ENCODE measurements at regions of chr3 and their contacts with region 1.

Region 1: DNA sequence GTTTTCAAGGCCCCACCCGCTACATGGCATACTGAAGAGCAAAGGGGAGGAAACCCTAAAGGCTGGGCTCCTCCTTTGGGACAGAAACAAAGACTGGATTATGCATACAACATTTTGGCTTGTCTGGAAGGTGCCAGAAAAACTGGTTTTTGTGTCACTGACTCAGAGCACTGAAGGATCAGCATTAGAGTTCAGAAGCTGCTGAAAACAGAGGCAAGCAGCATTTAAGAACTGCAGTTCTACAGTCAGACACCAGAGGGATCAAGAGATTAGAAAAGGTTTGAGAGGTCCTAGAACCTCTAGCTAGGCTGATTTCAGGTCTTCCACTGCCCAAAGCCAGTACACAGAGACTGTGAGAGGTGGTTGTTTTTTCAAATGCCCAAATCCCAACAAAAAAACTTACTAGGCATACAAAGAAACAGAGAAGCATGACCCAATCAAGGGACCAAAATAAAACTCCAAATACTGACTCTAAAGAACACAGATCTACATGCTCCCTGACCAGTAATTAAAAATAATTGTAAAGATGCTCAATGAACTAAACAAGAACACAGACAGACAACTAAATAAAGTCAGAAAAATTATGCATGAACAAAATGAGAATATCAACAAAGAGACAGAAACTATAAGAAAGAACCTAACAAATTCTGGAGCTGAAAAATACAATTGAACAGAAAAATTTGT is 91.2 kb downstream of the SENP2 start:
- DNase-seq: peak; percentile 79
- H3K4me3 Mint-ChIP-seq: no peak overlapping the region
- H3K27ac Mint-ChIP-seq: peak overlapping the region; percentile 63
- H3K4me1 Mint-ChIP-seq: peaks cover 8% of the 10 kb centered on the region
- H3K27me3 Mint-ChIP-seq: no peaks in the 10 kb centered on the region
- CTCF ChIP-seq: peak; percentile 70

Region 2: DNA sequence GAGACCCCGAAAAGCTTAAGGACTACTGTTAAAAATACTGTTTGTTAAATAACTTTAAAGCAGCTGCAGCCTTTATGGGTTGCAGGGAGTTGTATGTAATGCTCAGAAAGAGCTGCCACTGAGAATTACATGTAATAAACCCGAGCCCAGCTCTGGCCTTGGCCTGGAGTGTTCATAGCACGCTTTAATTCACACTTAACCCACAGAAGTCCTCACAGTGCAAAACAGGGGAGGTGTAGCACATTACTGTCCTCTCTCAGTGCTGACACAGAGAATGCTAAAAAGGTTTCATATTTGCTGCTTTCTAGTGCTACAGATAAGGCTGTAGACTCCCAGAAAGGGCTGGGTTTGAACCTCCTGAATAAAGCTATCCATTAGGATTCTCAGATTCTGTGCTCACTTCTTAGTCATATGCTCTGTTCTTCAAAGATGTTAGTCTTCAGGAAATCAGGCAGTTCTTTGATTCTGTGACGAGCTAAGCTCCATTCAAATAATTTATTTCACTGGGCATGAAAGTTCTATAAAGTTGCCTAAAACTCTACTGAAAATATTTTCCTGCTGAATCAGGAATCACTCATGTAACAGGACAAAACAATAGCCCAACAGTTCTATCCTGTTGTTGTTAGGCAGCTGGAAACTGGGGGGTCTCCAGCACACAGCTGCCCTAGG is 16.8 kb after region 1 on chr3:
- CTCF ChIA-PET with region 1: interaction called, 12 read pairs
- POLR2A ChIA-PET with region 1: interaction called, 8 read pairs
- intact Hi-C with region 1: no loop called
- DNase-seq: no peak
- H3K4me3 Mint-ChIP-seq: no peak overlapping the region
- H3K27ac Mint-ChIP-seq: peak overlapping the region; percentile 35
- H3K4me1 Mint-ChIP-seq: peaks cover 8% of the 10 kb centered on the region
- H3K27me3 Mint-ChIP-seq: no peaks in the 10 kb centered on the region
- CTCF ChIP-seq: no peak

Region 3: DNA sequence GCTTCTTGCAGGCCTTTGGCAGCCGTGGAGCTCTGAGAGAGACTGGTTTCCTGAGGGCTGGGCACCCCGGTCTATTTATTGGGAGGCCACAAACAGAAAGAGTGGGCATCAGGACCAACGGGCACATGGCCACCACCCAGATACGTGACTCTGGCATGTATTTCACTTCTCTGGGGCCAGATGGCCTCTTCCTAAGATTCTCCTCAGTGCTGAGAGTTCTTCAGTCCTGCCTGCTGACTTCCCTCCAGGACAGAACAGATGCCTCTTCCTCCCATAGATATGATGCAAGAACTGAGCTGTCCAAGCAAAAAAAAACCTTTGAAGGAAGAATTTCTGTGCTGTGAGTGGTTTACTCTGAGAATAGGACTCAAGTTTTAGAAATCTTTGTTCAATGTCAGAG is 39.8 kb after region 1 on chr3:
- CTCF ChIA-PET with region 1: interaction called, 5 read pairs
- POLR2A ChIA-PET with region 1: interaction called, 16 read pairs
- intact Hi-C with region 1: no loop called
- DNase-seq: peak; percentile 74
- H3K4me3 Mint-ChIP-seq: peak overlapping the region; percentile 40
- H3K27ac Mint-ChIP-seq: peak overlapping the region; percentile 96
- H3K4me1 Mint-ChIP-seq: peaks cover 55% of the 10 kb centered on the region
- H3K27me3 Mint-ChIP-seq: no peaks in the 10 kb centered on the region
- CTCF ChIP-seq: no peak

Region 4: DNA sequence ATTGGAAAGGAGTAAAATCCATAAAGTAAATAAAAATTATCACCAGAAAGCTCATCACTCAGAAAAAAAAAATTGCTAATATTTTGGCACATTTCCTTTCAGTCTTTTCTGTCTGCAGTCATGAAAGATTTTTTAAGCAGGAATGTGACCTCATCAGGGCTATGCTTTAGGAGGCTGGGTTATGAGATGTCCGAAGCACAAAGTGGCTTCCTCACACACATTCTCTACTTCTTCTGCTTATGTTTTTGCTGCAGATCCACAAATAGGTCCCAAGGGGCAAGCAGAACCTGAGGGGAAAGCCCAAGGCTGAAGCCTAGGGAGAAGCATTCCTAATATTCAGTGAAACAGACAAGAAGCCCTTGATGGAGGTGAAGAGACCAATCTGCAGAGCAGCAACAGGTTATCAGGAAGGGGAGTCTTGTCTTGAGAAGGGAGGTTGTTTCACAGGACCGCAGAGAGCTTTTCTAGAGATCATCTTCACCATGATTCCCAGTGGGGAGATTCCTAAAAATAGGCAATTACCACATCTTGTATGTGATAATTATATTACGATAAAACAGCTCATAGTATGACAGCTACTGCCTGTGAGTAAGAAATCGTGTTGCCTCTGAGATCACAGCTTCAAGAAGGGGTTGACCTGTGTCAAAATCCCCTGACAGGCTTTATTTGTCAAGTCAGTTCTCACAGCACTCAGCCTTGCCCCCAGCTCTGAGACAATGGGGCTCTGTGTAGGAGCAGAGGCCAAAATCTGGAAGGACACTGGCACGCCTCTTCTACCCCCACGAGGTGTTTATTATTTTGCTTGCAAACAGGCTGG is 87.1 kb after region 1 on chr3:
- CTCF ChIA-PET with region 1: interaction called, 21 read pairs
- POLR2A ChIA-PET with region 1: interaction called, 6 read pairs
- intact Hi-C with region 1: loop called (anchors 1 kb)
- DNase-seq: no peak
- H3K4me3 Mint-ChIP-seq: no peak overlapping the region
- H3K27ac Mint-ChIP-seq: peak overlapping the region; percentile 35
- H3K4me1 Mint-ChIP-seq: peaks cover 44% of the 10 kb centered on the region
- H3K27me3 Mint-ChIP-seq: no peaks in the 10 kb centered on the region
- CTCF ChIP-seq: no peak

Region 5: GRCh38 chr3:187291001-187291511 is 1613.8 kb after region 1 on chr3:
- CTCF ChIA-PET with region 1: no interaction called
- POLR2A ChIA-PET with region 1: no interaction called
- intact Hi-C with region 1: no loop called
- DNase-seq: no peak
- H3K4me3 Mint-ChIP-seq: no peak overlapping the region
- H3K27ac Mint-ChIP-seq: no peak overlapping the region
- H3K4me1 Mint-ChIP-seq: peaks cover 10% of the 10 kb centered on the region
- H3K27me3 Mint-ChIP-seq: peaks cover 30% of the 10 kb centered on the region
- CTCF ChIP-seq: no peak